Right cardiac atrium (tissue), 5 donors: ENCODE measurements at regions of chr22 and their contacts with region 1.

Region 1: DNA sequence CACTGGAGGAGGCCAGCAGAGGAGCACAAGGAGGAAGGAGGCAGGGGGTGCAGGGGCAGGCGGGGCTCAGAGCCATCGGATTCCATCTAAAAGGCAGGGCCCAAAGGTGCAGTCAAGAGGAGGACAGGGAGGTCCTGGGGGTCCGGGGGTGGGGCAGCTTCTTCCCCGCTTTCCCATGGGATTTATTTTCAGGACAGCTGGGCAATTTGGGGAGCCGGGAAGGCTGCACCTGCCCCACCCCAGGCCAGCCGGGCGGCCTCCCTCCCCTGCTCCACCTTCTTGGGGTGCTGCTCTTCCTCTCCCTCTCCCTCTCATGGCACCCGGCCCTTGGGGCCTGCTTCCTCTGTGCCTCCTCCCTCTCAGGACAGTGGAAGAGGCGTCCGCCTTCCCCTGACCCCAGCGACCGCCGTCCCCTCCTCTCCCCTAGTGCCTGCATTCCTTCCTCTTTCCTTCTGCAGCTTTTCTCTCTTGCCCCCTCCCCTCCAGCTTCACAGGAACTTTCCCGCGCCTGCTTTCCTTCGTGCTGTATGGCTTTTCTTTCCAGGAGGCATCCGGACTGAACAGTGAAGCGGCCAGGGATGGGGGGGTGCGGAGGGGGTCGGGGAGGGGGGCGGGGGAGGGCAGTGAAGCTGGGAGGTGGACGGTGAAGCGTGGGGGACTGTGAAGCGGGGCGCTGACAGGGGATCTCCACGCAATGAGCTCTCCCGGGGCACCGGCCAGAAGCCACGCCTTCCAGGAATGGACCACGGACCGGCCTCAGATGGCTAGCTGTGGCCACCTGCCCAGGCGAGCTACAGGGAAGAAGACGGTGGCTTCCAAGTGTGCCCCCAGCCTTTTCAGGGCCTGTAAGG is 26.9 kb downstream of the APOBEC3H start:
- DNase-seq: peak in 1 of 3 donors; percentile 49
- ATAC-seq: peak; percentile 33 to 36
- H3K4me3 ChIP-seq: no peak overlapping the region
- H3K27ac ChIP-seq: no peak overlapping the region
- H3K4me1 ChIP-seq: no peaks in the 10 kb centered on the region
- H3K27me3 ChIP-seq: no peaks in the 10 kb centered on the region

Region 2: DNA sequence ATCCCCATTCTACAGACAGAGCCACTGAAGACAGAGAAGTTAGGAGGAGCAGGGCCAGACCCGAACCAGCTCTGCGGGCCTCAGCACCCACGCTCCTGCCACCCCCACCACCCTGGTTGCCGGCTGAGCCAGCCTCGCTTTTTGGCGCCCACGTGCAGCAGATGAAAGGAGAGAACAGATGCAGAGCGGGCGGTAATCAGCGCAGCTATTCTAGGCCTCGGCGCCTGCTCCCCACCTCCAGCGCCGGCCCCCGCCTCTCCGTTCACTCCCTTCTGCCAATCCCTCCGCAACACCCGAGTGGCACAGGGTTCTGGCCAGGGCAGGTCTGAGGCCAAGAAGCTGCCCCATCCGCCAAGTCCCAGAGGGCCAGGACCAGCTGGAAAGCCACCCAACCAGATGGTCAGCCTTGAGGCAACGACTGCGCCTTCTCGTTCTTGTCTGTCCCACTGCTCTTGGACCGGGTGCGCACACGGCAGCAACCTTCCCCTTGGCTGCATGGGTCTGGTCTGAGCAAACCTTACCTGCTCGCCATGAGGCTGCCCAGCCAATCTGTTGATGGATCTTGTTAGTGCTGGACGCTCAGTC is 346.8 kb before region 1 on chr22:
- intact Hi-C with region 1: loop called in 1 of 4 experiments (anchors 10 kb)
- DNase-seq: peak in 1 of 3 donors; percentile 79
- ATAC-seq: peak; percentile 38 to 44
- H3K4me3 ChIP-seq: no peak overlapping the region
- H3K27ac ChIP-seq: no peak overlapping the region
- H3K4me1 ChIP-seq: peaks cover 5% of the 10 kb centered on the region
- H3K27me3 ChIP-seq: no peaks in the 10 kb centered on the region

Region 3: DNA sequence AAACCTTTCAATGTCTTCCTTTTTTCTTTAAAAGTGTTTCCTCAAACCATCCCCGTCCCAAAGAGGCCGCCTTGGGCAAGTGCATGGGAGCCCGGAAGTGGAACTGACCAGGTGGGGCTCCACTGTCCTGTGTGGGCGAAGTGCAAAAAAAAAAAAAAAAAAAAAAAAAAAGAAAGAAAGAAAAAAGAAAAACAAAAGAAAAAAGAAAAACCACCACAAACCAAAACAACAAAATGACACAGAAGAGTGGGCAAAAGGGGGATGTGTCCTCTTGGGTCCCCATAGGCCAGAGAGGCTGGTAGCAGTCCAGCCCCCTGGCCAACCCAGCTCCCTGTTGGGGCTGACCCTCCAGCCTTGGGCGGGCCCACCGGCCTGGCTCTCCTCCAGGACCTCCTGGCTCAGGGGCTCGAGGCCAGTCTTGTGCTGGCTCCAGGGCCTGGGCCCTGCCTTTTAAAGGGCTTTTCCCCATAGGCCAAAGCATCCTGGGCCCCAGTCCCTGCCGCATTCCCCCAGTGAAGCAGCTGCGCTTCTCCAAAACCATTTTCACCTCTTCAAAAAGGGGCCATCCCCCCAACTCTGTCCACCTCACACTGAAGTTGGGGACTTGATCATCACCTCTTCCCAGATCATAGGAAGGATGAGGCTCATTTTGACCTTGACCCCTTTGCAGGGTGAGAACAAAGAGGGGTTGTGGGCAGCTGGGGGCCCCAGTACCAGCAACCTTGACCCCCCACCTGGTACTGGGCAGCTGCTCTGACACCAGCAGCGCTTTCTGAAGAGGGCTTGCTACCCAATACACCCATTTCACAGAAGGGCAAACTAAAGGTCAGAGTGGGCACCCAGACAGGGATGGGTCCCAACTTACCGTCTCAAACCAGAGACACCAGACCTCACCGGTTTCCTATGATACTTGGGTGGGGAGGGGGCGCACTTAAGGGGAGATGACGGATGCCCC is 261.3 kb before region 1 on chr22:
- intact Hi-C with region 1: loop called in 2 of 4 experiments (anchors 5 to 10 kb)
- DNase-seq: peak; percentile 73 to 93 (median 91)
- ATAC-seq: peak; percentile 45 to 52
- H3K4me3 ChIP-seq: no peak overlapping the region
- H3K27ac ChIP-seq: no peak overlapping the region
- H3K4me1 ChIP-seq: peaks cover 18% of the 10 kb centered on the region
- H3K27me3 ChIP-seq: no peaks in the 10 kb centered on the region

Region 4: DNA sequence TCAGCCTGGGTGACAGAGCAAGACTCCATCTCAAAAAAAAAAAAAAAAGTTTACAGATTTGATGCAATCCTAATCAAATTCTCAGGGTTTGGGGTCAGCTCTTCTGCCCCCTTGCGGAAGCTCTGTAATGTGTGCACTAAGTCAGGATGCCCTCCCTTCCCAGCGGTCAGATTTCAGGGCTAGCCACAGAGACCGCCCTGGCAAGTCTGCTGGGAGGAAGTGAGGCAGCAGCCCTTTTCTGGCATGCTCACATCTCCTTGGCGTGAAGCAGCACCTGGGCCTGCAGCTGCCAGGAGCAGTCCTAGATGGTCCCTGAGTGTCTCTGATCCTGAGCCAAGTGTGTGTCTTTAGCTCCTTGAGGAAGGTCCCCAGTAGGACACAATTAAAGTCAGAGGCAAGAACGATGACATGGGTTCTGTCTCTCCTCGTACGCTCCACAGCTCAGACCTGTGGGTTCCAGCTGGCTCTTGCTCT is 120.8 kb before region 1 on chr22:
- intact Hi-C with region 1: loop called in 3 of 4 experiments (anchors 10 kb)
- DNase-seq: peak; percentile 77 to 88 (median 82)
- ATAC-seq: peak; percentile 91 to 93
- H3K4me3 ChIP-seq: no peak overlapping the region
- H3K27ac ChIP-seq: no peak overlapping the region
- H3K4me1 ChIP-seq: no peaks in the 10 kb centered on the region
- H3K27me3 ChIP-seq: no peaks in the 10 kb centered on the region

Region 5: GRCh38 chr22:39013942-39014722 is 109.8 kb before region 1 on chr22 and contains the start of gene APOBEC3C:
- intact Hi-C with region 1: loop called (anchors 10 kb)
- DNase-seq: peak; percentile 81 to 90 (median 87)
- ATAC-seq: peak; percentile 96 to 97
- H3K4me3 ChIP-seq: peak within 1 kb of the TSS; percentile 60
- H3K27ac ChIP-seq: peak within 1 kb of the TSS; percentile 77
- H3K4me1 ChIP-seq: no peaks in the 10 kb centered on the region
- H3K27me3 ChIP-seq: no peaks in the 10 kb centered on the region
- total RNA-seq, gene APOBEC3C: 25.4 to 41.9 (median 37.9) TPM